ENCODE measurements at regions of chr3 and their contacts with region 1.

Region 1: DNA sequence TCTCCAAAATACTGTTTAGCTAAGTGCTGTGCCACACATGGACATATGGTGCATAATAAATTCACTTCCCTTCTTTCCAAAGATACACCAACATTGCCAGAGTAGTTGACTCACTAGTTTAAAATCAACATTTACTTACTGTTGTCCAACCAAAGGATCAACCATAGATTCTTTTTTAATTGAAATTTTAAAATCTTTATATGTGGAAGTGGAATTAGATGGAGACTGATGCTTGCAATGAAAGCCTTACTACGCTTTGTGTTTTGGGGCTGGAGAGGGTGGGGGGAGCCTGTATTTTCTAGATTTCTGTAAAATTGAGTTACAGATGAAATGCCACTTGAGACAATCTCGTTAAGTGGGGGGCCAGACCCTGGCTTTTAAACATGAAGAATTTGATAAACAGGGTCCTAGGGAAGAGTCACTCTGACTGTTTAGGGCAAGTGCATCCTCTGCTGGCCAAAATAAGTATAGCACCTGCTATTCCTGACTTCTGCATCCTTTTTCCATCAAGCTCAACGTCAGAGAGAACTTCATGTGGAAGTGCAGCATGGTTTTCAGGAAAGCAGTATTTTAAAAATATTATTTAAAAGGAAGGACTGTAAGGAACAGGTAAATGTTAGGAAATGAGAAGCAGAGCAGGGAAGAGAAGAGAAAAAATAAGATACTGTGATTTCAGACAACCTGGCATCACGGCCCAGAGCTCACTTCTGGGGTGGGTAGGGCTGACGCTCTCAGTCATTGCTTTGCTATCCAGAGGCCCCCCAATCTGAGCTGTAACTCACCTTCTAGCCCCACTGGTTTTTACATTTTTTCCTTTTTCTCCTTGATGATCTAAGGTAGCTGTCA is 76.7 kb downstream of the BOC start:
- DNase-seq: peak; percentile 86
- H3K4me3 Mint-ChIP-seq: no peak overlapping the region
- H3K27ac Mint-ChIP-seq: no peak overlapping the region
- H3K4me1 Mint-ChIP-seq: peaks cover 4% of the 10 kb centered on the region
- H3K27me3 Mint-ChIP-seq: no peaks in the 10 kb centered on the region

Region 2: DNA sequence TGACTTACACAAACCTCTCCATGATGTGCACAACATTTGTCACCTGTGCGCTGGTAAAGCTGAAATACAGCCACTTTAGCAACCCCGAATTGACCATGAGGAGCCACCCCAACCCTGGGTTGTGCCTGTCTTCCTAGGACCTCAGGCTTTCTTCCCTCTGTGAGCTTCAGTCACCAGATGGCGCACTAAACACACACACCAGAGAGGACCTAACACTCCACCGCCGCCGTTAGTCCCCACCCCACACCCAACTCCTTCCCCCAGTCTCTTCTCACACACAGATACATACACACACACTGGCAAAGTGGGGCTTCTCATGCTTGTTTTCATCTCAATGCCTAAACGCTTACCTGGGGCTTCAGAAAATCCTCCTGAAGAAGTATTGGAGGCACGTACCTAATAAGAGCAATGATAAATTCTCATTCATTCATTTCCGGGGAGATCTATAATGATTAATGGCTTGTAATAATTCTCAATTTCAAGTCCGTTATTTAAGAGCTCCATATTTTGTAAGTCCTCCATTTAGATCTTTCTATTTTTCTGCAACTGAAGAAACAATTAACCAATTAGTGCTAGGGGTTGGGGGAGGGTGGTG is 645.0 kb before region 1 on chr3:
- intact Hi-C with region 1: loop called (anchors 1 kb)
- DNase-seq: peak; percentile 94
- H3K4me3 Mint-ChIP-seq: peak overlapping the region; percentile 78
- H3K27ac Mint-ChIP-seq: peak overlapping the region; percentile 34
- H3K4me1 Mint-ChIP-seq: peaks cover 21% of the 10 kb centered on the region
- H3K27me3 Mint-ChIP-seq: peaks cover 11% of the 10 kb centered on the region

Region 3: GRCh38 chr3:113035387-113035982 is 252.5 kb before region 1 on chr3:
- intact Hi-C with region 1: loop called (anchors 5 kb)
- DNase-seq: peak; percentile 84
- H3K4me3 Mint-ChIP-seq: no peak overlapping the region
- H3K27ac Mint-ChIP-seq: no peak overlapping the region
- H3K4me1 Mint-ChIP-seq: no peaks in the 10 kb centered on the region
- H3K27me3 Mint-ChIP-seq: no peaks in the 10 kb centered on the region

Region 4: DNA sequence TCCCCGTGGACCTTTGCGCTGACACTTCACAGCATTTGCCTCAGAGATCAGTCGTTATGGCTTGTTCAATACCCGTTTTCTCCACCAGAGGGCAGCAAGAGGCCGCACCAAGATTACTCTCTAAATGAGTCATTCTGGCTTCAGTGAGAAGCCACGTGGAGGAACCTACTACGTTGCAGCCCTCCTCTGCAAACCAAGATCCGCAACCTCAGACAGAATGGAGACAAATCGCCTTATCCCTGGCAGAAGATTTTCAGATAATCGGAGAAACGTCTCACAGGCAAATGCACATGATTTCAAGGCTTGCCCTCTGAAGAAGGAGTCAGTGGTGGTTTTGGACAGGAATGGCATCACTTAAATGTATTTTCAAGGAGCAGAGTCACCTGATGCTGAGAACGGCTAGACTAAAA is 236.7 kb before region 1 on chr3:
- intact Hi-C with region 1: loop called (anchors 1 kb)
- DNase-seq: peak; percentile 96
- H3K4me3 Mint-ChIP-seq: no peak overlapping the region
- H3K27ac Mint-ChIP-seq: no peak overlapping the region
- H3K4me1 Mint-ChIP-seq: peaks cover 2% of the 10 kb centered on the region
- H3K27me3 Mint-ChIP-seq: peaks cover 2% of the 10 kb centered on the region

Region 5: DNA sequence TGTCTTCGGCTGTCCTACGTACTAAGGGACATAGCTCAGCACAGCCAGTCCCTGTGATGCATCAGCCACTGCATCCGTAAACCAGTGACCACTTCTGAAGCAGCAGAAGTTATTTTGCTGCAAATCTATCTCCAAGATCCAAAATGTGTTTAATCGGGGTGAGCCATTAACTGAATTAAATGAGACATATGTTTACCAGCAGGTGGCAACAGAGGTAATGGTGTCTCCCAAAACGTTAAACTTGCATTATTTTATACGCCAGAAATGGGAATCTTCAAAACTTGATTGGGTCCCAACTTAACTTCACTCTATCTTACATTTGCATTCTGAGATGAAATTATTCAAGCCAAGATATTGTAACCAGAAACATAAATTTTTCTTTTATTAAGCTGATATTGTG is 152.0 kb before region 1 on chr3:
- intact Hi-C with region 1: loop called (anchors 1 kb)
- DNase-seq: no peak
- H3K4me3 Mint-ChIP-seq: no peak overlapping the region
- H3K27ac Mint-ChIP-seq: no peak overlapping the region
- H3K4me1 Mint-ChIP-seq: peaks cover 3% of the 10 kb centered on the region
- H3K27me3 Mint-ChIP-seq: peaks cover 2% of the 10 kb centered on the region

Region 6: GRCh38 chr3:113575206-113575605 is 287.2 kb after region 1 on chr3:
- intact Hi-C with region 1: loop called (anchors 1 kb)
- DNase-seq: no peak
- H3K4me3 Mint-ChIP-seq: no peak overlapping the region
- H3K27ac Mint-ChIP-seq: no peak overlapping the region
- H3K4me1 Mint-ChIP-seq: peaks cover 5% of the 10 kb centered on the region
- H3K27me3 Mint-ChIP-seq: no peaks in the 10 kb centered on the region

Measured in activated CD4-positive, alpha-beta T cell treated with anti-CD3 and anti-CD28 coated beads, Interleukin-2, amount 10 ng/mL, durations not matched to agents 24 days and 14 days (primary cell).